ENCODE measurements at regions of chr10 and their contacts with region 1.

Region 1: DNA sequence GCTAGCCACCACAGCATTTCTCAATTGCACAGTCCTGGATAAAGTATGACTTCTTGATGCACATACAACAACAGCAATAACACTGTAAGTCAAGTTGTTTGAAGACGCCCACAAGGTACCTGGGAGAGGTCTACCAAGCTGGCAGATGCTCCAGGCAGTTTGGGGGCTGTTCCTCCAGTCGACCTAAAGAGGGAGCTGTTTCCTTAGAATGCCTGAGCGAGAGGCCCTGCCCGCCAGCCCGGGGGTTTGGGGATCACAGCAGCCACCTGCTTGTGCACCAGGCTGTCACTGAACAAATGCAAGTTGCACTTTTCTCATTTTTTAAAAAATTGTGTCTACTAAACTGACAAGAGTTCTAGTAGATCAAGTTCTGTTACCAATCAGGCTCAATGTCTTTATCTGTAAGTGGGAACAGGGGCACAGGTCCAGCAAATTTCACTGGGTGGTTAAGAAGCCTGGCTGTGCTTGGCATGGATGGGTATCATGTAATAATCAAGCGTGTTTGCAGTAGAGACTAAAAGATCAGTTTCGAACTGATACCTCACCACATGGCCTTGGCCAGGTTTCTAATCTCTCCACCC is 193.8 kb upstream of the ADO start:
- DNase-seq: peak; percentile 93
- H3K4me3 Mint-ChIP-seq: no peak overlapping the region
- H3K27ac Mint-ChIP-seq: peak overlapping the region; percentile 27
- H3K4me1 Mint-ChIP-seq: peaks cover 46% of the 10 kb centered on the region
- H3K27me3 Mint-ChIP-seq: peaks cover 5% of the 10 kb centered on the region

Region 2: GRCh38 chr10:62726142-62726541 is 115.4 kb after region 1 on chr10:
- intact Hi-C with region 1: loop called (anchors 1 kb)
- DNase-seq: peak; percentile 68
- H3K4me3 Mint-ChIP-seq: peak overlapping the region; percentile 20
- H3K27ac Mint-ChIP-seq: peak overlapping the region; percentile 76
- H3K4me1 Mint-ChIP-seq: peaks cover 51% of the 10 kb centered on the region
- H3K27me3 Mint-ChIP-seq: peaks cover 1% of the 10 kb centered on the region

Region 3: DNA sequence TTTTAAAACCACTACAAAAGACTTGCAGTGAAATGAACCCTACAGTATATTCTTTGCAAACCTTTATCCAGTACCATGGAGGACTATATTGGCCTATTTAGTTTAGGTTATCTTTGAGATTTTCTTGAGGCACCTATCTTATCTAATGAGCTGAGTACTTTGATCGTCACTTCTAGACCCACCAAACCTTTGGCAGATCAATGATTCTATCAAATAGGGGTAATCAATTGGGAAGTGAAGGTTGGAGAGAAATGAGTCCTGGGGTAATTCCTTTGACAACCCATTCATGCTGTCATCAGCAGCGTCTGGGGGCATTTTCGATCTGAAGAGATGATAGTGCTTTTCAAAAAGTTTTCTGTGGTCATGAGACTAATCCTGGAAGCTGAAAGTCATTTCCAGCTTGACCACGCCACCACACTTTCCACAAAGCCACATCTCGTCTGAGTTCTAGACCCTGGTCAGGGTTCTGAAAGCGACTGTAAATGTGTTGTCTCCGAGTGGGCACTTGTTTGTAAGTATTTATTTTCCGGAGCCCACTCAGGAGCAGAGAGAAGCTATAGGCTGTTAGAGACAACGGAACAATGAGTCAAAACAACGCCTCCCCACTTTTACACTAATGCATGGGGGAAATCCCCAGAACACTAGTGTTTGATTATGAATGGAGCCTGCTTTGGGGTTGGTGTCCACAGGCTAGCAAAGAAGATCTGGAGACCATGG is 200.6 kb after region 1 on chr10:
- intact Hi-C with region 1: loop called (anchors 1 kb)
- DNase-seq: peak; percentile 90
- H3K4me3 Mint-ChIP-seq: peak overlapping the region; percentile 97
- H3K27ac Mint-ChIP-seq: peak overlapping the region; percentile 100
- H3K4me1 Mint-ChIP-seq: peaks cover 67% of the 10 kb centered on the region
- H3K27me3 Mint-ChIP-seq: peaks cover 1% of the 10 kb centered on the region

Region 4: GRCh38 chr10:63083904-63084689 is 473.4 kb after region 1 on chr10:
- intact Hi-C with region 1: loop called (anchors 1 kb)
- DNase-seq: peak; percentile 79
- H3K4me3 Mint-ChIP-seq: no peak overlapping the region
- H3K27ac Mint-ChIP-seq: no peak overlapping the region
- H3K4me1 Mint-ChIP-seq: no peaks in the 10 kb centered on the region
- H3K27me3 Mint-ChIP-seq: peaks cover 33% of the 10 kb centered on the region